ENCODE measurements at regions of chrX and their contacts with region 1.

Region 1: GRCh38 chrX:24150051-24150790 is 692 bp downstream of the ZFX start:
- DNase-seq: peak; percentile 92
- ATAC-seq: peak; percentile 81
- H3K4me3 Mint-ChIP-seq: peak overlapping the region; percentile 93
- H3K27ac Mint-ChIP-seq: peak overlapping the region; percentile 97
- H3K4me1 Mint-ChIP-seq: peaks cover 50% of the 10 kb centered on the region
- H3K27me3 Mint-ChIP-seq: no peaks in the 10 kb centered on the region

Region 2: DNA sequence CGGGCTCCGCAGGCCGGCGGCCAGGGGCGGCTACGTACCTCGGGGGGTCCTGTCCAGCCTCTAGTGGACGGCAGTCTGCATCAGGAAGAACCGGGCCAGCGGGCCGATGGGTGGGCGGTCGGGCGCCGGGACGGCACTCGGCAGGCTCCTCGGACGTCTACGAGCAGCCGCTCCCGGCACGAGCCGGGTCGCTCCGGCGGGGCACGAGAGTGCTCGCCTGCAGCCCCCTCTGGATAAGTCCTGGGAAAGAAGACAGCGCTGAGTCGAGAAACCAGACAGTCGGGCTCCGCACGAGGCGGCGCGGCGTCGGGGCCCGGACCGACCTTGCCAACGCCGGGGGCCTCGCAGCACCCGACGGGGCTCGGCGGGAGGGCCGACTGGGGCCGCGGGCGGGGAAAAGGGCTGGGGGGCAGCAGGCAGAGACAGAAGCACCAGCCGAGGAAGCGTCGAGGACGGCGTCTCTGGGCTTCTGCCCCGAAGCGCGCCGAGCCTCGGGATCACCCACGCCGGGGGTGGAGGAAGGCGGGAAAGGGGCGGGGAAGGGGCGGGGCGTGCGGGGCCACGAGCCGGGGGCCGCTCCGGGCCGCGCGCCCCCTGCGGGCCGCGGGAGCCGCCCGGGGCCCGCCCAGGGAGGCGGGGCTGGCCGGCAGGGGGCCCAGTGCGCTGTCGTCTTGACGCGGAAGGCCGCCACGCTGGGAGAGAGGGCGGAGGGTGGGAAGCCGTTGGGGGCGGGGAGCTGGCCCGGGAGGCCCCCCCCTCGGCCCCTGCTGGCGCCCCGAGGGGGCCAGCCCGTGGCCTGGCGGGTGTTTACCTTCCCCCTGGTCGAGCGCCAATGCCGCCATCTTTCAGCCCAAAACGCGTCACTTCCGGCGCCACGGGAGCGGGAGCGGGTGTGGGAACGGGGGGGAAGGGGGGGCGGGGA is 125.1 kb before region 1 on chrX:
- CTCF ChIA-PET with region 1: no interaction called
- POLR2A ChIA-PET with region 1: no interaction called
- intact Hi-C with region 1: loop called in 1 of 2 experiments (anchors 1 kb)
- DNase-seq: peak; percentile 91
- ATAC-seq: peak; percentile 89
- H3K4me3 Mint-ChIP-seq: peak overlapping the region; percentile 83
- H3K27ac Mint-ChIP-seq: peak overlapping the region; percentile 58
- H3K4me1 Mint-ChIP-seq: peaks cover 19% of the 10 kb centered on the region
- H3K27me3 Mint-ChIP-seq: no peaks in the 10 kb centered on the region

Region 3: GRCh38 chrX:24169211-24169610 is 19.0 kb after region 1 on chrX:
- CTCF ChIA-PET with region 1: interaction called, 3 read pairs
- POLR2A ChIA-PET with region 1: no interaction called
- intact Hi-C with region 1: loop called (anchors 1 to 2 kb)
- DNase-seq: no peak
- ATAC-seq: peak; percentile 59
- H3K4me3 Mint-ChIP-seq: no peak overlapping the region
- H3K27ac Mint-ChIP-seq: peak overlapping the region; percentile 90
- H3K4me1 Mint-ChIP-seq: peaks cover 60% of the 10 kb centered on the region
- H3K27me3 Mint-ChIP-seq: no peaks in the 10 kb centered on the region

Region 4: DNA sequence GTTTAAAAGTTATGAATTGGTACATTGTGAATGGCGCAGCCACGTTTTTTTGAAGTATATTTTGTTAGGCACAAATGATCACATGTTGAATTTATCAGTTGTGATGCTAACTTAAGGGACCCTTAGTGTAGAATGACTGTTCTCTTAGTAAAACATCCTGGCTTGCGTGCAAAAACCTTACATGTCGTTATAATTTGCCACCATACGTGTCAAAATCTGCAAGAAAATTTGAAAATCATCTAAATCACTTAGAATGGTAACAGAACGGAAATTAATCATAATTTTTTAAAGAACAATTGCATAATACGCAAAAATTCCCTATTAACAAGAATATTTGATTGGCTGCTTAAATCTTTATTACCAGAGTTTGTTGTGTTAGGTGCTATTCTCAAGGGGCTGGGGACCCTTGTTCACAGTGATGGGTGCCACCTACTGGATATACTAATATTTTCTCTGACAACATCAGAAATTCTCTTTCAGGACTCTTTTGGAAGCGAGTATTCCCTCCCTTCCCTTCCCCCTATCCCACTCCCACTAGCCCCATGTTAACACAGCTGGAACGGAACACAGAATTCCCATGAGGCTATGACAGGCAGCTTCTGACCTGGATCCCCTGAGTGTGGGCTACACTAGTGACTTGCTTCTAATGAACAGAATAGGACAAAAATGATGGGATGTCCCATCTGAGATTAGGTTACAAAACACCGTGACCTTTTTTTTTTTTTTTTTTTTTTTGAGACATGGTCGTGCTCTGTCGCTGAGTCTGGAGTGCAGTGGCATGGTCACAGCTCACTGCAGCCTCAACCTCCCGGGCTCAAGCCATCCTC is 91.8 kb after region 1 on chrX:
- CTCF ChIA-PET with region 1: no interaction called
- POLR2A ChIA-PET with region 1: no interaction called
- intact Hi-C with region 1: loop called (anchors 2 to 10 kb)
- DNase-seq: no peak
- ATAC-seq: no peak
- H3K4me3 Mint-ChIP-seq: no peak overlapping the region
- H3K27ac Mint-ChIP-seq: no peak overlapping the region
- H3K4me1 Mint-ChIP-seq: peaks cover 11% of the 10 kb centered on the region
- H3K27me3 Mint-ChIP-seq: no peaks in the 10 kb centered on the region

Measured in activated CD4-positive, alpha-beta T cell treated with anti-CD3 and anti-CD28 coated beads for 36 hours (primary cell).